MCF 10A (cell line): ENCODE measurements at regions of chr1 and their contacts with region 1.

Region 1: GRCh38 chr1:85884372-85885035 is 176.3 kb upstream of the ZNHIT6 start:
- DNase-seq: peak; percentile 42
- H3K4me3 Mint-ChIP-seq: no peak overlapping the region
- H3K27ac Mint-ChIP-seq: no peak overlapping the region
- H3K4me1 Mint-ChIP-seq: no peaks in the 10 kb centered on the region
- H3K27me3 Mint-ChIP-seq: peaks cover 13% of the 10 kb centered on the region
- CTCF ChIP-seq: peak; percentile 52

Region 2: GRCh38 chr1:85656948-85657347 is 227.6 kb before region 1 on chr1:
- CTCF ChIA-PET with region 1: interaction called, 10 read pairs
- POLR2A ChIA-PET with region 1: no interaction called
- intact Hi-C with region 1: no loop called
- DNase-seq: no peak
- H3K4me3 Mint-ChIP-seq: no peak overlapping the region
- H3K27ac Mint-ChIP-seq: peak overlapping the region; percentile 67
- H3K4me1 Mint-ChIP-seq: no peaks in the 10 kb centered on the region
- H3K27me3 Mint-ChIP-seq: no peaks in the 10 kb centered on the region
- CTCF ChIP-seq: no peak

Region 3: GRCh38 chr1:85707990-85708828 is 176.3 kb before region 1 on chr1 and contains the start of gene ZNHIT6:
- CTCF ChIA-PET with region 1: interaction called, 5 read pairs
- POLR2A ChIA-PET with region 1: interaction called, 3 read pairs
- intact Hi-C with region 1: loop called (anchors 1 kb)
- DNase-seq: peak; percentile 96
- H3K4me3 Mint-ChIP-seq: no peak within 1 kb of the TSS
- H3K27ac Mint-ChIP-seq: no peak within 1 kb of the TSS
- H3K4me1 Mint-ChIP-seq: peaks cover 13% of the 10 kb centered on the region
- H3K27me3 Mint-ChIP-seq: no peaks in the 10 kb centered on the region
- CTCF ChIP-seq: peak; percentile 32
- total RNA-seq, gene ZNHIT6: 24.7 and 31.3 TPM in 2 replicates

Region 4: DNA sequence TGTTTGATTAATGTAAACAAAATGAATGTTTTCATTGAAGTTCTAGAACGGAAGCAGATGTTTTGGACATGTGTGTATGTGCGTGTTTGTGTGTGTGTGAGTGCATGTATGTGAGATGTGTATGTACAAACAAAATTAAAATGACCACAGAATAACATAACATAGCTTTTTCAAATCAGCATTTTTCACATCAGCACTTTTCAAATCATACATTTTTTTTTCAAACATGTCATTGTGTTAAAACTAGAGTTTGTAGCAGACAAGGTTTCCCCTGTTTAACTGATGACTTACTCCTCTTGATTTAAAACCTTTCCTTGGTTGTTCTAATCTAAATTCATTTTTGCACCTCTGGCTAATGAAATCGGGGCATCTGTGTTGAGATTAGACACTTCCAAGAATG is 140.7 kb before region 1 on chr1:
- CTCF ChIA-PET with region 1: no interaction called
- POLR2A ChIA-PET with region 1: no interaction called
- intact Hi-C with region 1: no loop called
- DNase-seq: no peak
- H3K4me3 Mint-ChIP-seq: no peak overlapping the region
- H3K27ac Mint-ChIP-seq: no peak overlapping the region
- H3K4me1 Mint-ChIP-seq: peaks cover 6% of the 10 kb centered on the region
- H3K27me3 Mint-ChIP-seq: no peaks in the 10 kb centered on the region
- CTCF ChIP-seq: no peak